Tibial artery (tissue), 4 donors: ENCODE measurements at regions of chr20 and their contacts with region 1.

Region 1: DNA sequence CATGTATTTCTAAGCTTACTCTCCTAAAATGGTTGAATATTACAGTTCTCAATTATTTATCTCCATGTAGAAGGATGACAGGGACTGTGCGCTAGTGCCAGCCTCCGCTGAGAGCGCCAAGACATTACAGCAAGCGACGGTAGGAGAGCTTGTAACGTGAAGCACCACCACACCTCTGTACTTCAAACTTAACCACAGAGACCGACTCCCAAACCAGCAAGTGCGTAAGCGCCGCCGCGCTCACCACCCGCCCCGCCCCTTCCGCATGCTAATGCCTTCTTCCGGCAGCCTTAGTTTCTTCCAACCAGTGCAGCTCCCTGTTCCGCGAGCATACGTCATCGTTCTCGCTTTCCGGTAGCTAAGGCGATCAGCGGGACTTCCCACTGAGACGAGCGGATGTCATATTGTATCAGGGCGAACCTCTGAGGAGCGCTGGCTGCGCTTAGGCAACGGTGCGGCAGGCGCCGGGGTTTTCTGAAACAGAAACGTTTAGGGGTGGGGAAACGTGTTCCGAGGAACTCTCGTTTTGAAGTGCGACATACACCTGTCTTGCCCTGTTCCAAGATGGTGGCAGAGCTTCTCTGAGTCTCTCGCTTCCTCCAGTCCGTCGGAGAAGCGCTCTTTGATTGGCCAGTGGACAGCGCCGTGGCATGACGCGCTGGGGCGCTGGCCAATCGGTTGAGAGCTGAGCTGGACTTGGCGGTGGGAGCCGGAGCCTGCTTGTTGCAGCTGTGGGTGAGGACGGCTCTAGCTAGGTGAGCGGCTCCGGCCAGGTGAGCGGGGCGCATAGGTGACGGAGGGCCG is at the start of gene SEC23B:
- DNase-seq: peak; percentile 96 to 97
- H3K4me3 ChIP-seq: peak within 1 kb of the TSS; percentile 63 to 73
- H3K27ac ChIP-seq: peak within 1 kb of the TSS; percentile 92 to 95
- H3K4me1 ChIP-seq: peaks cover 0 to 16% (median 10%) of the 10 kb centered on the region in 4 donors
- H3K27me3 ChIP-seq: no peaks in the 10 kb centered on the region
- CTCF ChIP-seq: peak in 1 of 2 experiments; percentile 11

Region 2: DNA sequence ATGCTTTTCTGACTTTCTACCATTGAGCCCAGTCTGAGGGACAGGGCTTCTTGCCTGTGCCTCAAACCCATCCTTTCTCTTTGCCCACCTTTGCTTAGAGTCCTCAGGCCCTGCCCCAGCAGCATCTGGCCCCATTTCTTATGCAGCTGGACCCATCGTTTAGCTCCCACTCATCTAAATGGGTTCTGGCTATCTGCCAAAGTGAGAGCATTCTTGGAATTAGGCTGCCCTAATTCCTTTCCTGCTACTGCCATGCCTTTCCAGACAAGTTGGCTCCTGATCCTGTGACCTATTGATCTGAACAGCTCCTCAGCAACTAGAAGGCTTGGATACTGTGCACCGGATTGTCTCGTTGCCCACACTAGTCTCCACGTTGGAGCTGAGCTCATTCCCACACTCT is 63.6 kb before region 1 on chr20:
- intact Hi-C with region 1: no loop called
- DNase-seq: no peak
- H3K4me3 ChIP-seq: no peak overlapping the region
- H3K27ac ChIP-seq: no peak overlapping the region
- H3K4me1 ChIP-seq: peaks cover 0 to 11% (median 4%) of the 10 kb centered on the region in 4 donors
- H3K27me3 ChIP-seq: no peaks in the 10 kb centered on the region
- CTCF ChIP-seq: no peak

Region 3: GRCh38 chr20:18466894-18467730 is 40.3 kb before region 1 on chr20 and contains the starts of genes DZANK1 and POLR3F:
- intact Hi-C with region 1: loop called (anchors 5 kb)
- DNase-seq: peak; percentile 97
- H3K4me3 ChIP-seq: peak within 1 kb of the TSS; percentile 71 to 77
- H3K27ac ChIP-seq: peak within 1 kb of the TSS; percentile 73 to 79
- H3K4me1 ChIP-seq: peaks cover 0 to 20% (median 14%) of the 10 kb centered on the region in 4 donors
- H3K27me3 ChIP-seq: peaks cover 0 to 5% of the 10 kb centered on the region in 2 donors
- CTCF ChIP-seq: no peak

Region 4: DNA sequence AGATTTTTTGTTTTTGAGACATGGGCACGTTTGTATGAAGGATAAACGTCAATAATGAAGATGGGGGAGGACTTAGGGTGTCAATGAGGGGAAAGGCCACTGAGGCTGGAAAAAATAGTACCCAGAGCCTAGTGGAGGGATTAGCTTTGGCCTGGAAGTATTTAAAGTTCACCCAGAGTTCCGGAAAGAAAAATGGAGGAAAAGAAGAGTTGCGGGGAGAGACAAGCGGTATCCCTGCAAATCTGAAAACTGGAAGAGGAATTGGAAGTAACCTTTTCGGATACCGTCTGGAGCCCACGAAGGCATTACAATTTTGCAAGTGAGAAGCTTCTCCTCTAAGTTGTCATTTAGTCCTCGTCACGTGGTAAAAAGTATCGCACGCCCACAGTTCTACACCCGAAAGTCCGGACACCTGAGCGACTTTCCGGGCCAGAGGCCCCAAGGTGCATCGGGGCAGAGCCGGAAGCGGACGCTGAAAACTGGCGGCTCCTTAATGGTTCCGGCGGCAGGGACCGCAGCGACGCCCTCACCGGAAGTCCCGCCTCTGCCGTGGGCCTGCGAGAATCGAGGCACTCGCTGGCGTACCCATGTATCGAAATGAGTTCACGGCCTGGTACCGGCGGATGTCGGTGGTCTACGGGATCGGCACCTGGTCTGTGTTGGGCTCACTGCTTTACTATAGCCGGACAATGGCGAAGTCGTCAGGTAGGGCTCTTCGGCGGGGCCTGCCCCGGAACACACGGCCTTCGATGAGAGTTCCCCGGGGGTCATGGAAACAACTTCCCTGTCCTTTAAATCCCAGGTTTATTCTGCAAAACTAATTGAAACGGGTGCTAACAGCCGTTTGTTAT is 59.7 kb after region 1 on chr20 and contains the start of gene SMIM26:
- intact Hi-C with region 1: loop called (anchors 5 kb)
- DNase-seq: peak; percentile 90 to 93
- H3K4me3 ChIP-seq: peak within 1 kb of the TSS; percentile 58 to 76
- H3K27ac ChIP-seq: peak within 1 kb of the TSS; percentile 82 to 92
- H3K4me1 ChIP-seq: peaks cover 0 to 12% (median 7%) of the 10 kb centered on the region in 4 donors
- H3K27me3 ChIP-seq: no peaks in the 10 kb centered on the region
- CTCF ChIP-seq: no peak